ENCODE measurements at regions of chr7 and their contacts with region 1.

Region 1: GRCh38 chr7:99910976-99911375 is 8.4 kb downstream of the TRIM4 start:
- DNase-seq: no peak
- ATAC-seq: no peak
- H3K4me3 ChIP-seq: no peak overlapping the region
- H3K27ac ChIP-seq: no peak overlapping the region
- H3K4me1 ChIP-seq: no peaks in the 10 kb centered on the region
- H3K27me3 ChIP-seq: no peaks in the 10 kb centered on the region
- CTCF ChIP-seq: no peak
- EP300 ChIP-seq: no peak
- POLR2A ChIP-seq: no peak
- RAD21 ChIP-seq: no peak

Region 2: DNA sequence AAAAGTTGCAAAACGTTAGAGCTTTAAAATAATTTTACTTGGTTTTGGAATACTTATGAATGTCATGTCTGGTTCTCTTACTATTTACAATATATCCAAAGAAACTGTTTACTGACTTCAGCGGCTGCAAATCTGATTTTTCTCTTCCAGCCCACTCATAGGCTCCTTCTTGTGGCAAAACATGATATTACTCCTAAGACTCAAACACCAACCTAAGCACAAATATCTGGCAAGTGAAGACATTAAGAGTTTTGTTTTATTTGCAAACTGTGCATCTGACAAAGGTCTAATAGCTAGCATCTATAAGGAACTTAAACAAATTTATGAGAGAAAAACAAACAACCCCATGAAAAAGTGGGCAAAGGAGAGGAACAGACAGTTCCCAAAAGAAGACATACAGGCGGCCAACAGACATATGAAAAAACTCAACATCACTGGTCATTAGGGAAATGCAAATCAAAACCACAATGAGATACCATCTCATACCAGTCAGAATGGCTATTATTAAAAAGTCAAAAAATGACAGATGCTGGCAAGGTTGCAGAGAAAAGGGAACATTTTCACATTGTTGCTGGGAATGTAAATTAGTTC is 38.8 kb after region 1 on chr7:
- CTCF ChIA-PET with region 1: interaction called, 6 read pairs
- POLR2A ChIA-PET with region 1: no interaction called
- in situ Hi-C with region 1: no loop called
- intact Hi-C with region 1: loop called (anchors 1 kb)
- DNase-seq: peak; percentile 21
- ATAC-seq: no peak
- H3K4me3 ChIP-seq: no peak overlapping the region
- H3K27ac ChIP-seq: no peak overlapping the region
- H3K4me1 ChIP-seq: peaks cover 7% of the 10 kb centered on the region; the same call in 1 of the 2 replicates
- H3K27me3 ChIP-seq: no peaks in the 10 kb centered on the region
- CTCF ChIP-seq: peak; percentile 47
- EP300 ChIP-seq: no peak
- POLR2A ChIP-seq: no peak
- RAD21 ChIP-seq: no peak

Region 3: DNA sequence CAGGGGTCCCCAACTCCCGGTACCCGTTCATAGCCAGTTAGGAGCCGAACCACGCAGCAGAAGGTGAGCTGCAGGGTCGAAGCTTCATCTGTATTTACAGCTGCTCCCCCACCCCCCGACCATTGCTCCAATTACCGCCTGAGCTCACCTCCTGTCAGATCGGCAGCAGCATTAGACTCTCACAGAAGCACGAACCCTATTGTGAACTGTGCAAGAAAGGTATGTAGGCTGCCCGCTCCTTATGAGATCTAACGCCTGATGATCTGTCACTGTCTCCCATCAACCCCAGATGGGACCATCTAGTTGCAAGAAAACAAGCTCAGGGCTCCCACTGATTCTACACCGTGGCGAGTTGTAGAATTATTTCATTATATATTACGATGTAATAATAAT is 79.5 kb after region 1 on chr7:
- CTCF ChIA-PET with region 1: interaction called, 33 read pairs
- POLR2A ChIA-PET with region 1: interaction called, 3 read pairs
- in situ Hi-C with region 1: loop called (anchors 5 kb)
- intact Hi-C with region 1: loop called (anchors 1 kb)
- DNase-seq: no peak
- ATAC-seq: no peak
- H3K4me3 ChIP-seq: no peak overlapping the region; a peak in 1 of 6 replicates
- H3K27ac ChIP-seq: no peak overlapping the region
- H3K4me1 ChIP-seq: peaks cover 60% of the 10 kb centered on the region
- H3K27me3 ChIP-seq: no peaks in the 10 kb centered on the region
- CTCF ChIP-seq: no peak
- EP300 ChIP-seq: no peak
- POLR2A ChIP-seq: no peak
- RAD21 ChIP-seq: no peak